Activated naive CD4-positive, alpha-beta T cell treated with anti-CD3 and anti-CD28 coated beads, Interleukin-2, amount 10 ng/mL, durations not matched to agents 7 days and 5 days (primary cell): ENCODE measurements at regions of chr19 and their contacts with region 1.

Region 1: GRCh38 chr19:10251792-10252694 is at the start of gene MRPL4:
- DNase-seq: peak; percentile 99
- H3K4me3 Mint-ChIP-seq: peak within 1 kb of the TSS; percentile 97
- H3K27ac Mint-ChIP-seq: peak within 1 kb of the TSS; percentile 98
- H3K4me1 Mint-ChIP-seq: peaks cover 26% of the 10 kb centered on the region
- H3K27me3 Mint-ChIP-seq: peaks cover 4% of the 10 kb centered on the region

Region 2: DNA sequence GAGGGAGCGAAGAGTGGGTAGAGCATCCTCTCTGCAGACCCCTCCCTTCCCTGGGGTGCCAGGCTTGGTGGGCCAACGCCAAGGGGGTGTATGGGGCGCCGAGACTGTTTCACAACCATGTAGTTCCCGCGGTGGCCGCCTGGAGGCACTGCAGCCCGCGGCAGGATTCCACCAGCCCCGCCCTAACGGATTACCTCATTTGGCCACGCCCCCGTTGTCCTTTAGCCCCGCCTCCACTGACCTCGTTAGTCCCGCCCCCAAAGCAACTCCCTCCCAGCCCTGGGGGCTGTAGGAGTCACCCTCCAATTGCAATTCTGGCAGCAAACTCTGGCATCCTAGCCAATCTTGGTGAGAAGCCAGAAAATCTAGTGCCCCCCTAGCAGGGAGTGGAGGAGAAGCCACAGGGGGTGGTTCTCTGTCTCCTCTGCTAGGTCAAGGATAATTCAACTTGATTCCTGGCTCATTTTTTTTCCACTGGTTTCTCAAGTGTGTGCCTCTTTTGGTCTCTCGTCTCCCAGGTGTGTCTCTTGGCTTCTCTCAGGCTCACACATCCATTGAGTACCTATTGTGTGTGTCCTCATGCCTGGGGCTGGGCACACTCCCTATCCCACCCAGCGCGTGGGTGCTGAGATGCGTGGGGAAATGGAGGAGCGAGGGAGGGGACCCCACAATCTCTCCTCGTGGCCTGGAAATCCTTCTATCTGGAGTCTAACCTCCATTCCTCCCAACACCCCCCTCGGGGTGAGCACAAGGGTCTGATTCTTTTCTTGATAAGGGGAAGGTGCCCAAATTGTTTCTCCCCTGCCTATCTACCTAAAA is 317.7 kb before region 1 on chr19:
- CTCF ChIA-PET with region 1: interaction called, 11 read pairs
- DNase-seq: peak; percentile 83
- H3K4me3 Mint-ChIP-seq: no peak overlapping the region
- H3K27ac Mint-ChIP-seq: no peak overlapping the region
- H3K4me1 Mint-ChIP-seq: peaks cover 26% of the 10 kb centered on the region
- H3K27me3 Mint-ChIP-seq: peaks cover 82% of the 10 kb centered on the region

Region 3: DNA sequence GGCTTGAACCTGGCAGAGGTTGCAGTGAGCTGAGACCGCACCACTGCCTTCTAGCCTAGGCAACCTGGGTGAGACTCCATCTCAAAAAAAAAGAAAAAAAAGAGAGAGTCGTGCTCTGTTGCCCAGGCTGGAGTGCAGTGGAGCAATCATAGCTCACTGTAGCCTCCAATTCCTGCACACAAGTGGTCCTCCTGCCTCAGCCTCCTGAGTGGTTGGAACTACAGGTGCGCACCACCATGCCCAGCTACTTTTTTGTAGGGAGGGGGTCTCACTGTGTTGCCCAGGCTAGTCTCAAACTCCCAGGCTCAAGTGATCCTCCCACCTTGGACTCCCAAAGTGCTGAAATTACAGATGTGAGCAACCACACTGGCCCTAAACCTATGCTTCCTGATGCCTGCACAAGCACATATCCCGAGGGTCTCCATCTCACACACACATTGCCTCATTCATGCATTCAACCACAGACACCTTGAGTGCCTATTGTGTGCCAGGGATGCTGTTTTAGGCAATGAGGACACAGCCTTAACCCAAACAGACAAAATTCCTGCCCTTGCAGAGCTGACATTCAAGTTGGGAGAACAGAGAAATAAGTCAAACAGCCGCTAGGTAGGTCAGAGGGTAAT is 151.8 kb before region 1 on chr19:
- CTCF ChIA-PET with region 1: interaction called, 21 read pairs
- DNase-seq: no peak
- H3K4me3 Mint-ChIP-seq: no peak overlapping the region
- H3K27ac Mint-ChIP-seq: no peak overlapping the region
- H3K4me1 Mint-ChIP-seq: peaks cover 55% of the 10 kb centered on the region
- H3K27me3 Mint-ChIP-seq: peaks cover 5% of the 10 kb centered on the region

Region 4: DNA sequence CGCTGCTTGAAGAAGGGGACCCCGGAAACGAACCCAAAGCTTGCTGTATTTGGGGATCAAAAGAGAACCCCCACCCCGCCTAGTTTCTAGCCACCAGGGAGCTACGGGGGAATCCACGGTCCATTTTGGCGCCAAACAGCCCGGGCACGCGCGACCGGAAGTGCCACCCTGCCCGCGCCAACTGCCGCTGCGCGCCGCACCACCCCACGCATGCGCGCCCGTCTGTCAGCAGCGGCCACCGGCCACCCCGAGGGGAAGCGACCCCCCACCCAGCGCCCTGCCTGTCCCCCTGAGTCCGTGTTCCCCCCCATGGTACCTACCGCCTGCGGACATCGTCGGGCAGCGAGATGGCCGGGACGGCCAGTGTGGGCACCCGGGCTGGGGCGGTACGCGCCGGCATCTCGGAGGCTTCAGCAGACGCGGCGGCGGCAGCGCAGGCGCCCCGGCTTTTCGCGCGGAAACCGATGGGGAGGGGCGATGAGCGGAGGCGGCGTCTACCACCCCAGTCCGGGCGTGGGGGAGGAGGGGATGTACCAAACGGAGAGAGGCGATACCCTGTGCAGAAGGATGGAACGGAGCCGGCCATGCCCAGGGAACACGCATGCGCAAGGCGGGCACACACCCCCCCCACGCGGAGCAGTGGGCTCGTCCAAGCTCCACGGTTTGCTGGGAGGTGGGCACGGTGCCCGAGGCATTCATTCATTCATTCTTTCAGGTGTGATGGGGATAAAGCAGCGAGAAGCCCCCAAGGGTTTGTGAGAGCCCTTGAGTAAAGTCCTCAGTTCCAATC is 57.3 kb before region 1 on chr19 and contains the start of gene DNMT1:
- CTCF ChIA-PET with region 1: interaction called, 24 read pairs
- DNase-seq: peak; percentile 98
- H3K4me3 Mint-ChIP-seq: peak within 1 kb of the TSS; percentile 99
- H3K27ac Mint-ChIP-seq: peak within 1 kb of the TSS; percentile 98
- H3K4me1 Mint-ChIP-seq: peaks cover 57% of the 10 kb centered on the region
- H3K27me3 Mint-ChIP-seq: peaks cover 4% of the 10 kb centered on the region

Region 5: GRCh38 chr19:10201176-10201575 is 50.9 kb before region 1 on chr19:
- CTCF ChIA-PET with region 1: interaction called, 24 read pairs
- DNase-seq: no peak
- H3K4me3 Mint-ChIP-seq: no peak overlapping the region
- H3K27ac Mint-ChIP-seq: no peak overlapping the region
- H3K4me1 Mint-ChIP-seq: peaks cover 19% of the 10 kb centered on the region
- H3K27me3 Mint-ChIP-seq: peaks cover 8% of the 10 kb centered on the region

Region 6: GRCh38 chr19:10228920-10229319 is 23.1 kb before region 1 on chr19:
- CTCF ChIA-PET with region 1: interaction called, 42 read pairs
- DNase-seq: peak; percentile 64
- H3K4me3 Mint-ChIP-seq: peak overlapping the region; percentile 67
- H3K27ac Mint-ChIP-seq: no peak overlapping the region
- H3K4me1 Mint-ChIP-seq: peaks cover 11% of the 10 kb centered on the region
- H3K27me3 Mint-ChIP-seq: peaks cover 26% of the 10 kb centered on the region

Region 7: DNA sequence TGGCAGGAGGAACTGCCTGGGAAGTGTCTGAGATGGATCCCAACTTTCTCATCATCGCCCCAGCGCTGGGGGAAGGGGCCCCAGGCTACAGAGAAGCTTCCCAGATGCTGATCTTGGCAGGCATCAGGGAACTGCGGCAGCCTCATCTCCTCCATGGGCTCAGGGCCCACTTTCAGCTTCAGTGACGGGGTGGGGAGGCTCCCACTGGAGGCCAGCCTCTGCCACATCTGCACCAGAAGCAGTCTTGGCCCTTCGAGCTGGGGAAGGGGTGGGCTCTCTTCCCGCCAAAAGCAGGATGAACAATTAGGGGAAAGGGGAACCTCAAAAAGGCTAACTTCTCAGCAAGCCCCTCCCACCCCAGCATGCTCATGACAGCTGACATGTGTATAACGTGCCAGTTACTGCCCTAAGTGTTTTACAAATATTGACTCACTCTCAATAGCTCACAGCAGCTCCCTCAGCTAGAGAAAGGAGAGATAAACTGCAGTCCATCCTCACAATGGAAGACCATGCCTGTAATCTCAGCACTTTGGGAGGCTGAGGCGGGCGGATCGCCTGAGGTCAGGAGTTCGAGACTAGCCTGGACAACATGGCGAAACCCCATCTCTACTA is 13.8 kb before region 1 on chr19:
- CTCF ChIA-PET with region 1: interaction called, 42 read pairs
- DNase-seq: no peak
- H3K4me3 Mint-ChIP-seq: no peak overlapping the region
- H3K27ac Mint-ChIP-seq: no peak overlapping the region
- H3K4me1 Mint-ChIP-seq: peaks cover 30% of the 10 kb centered on the region
- H3K27me3 Mint-ChIP-seq: peaks cover 3% of the 10 kb centered on the region